IMR-90 (cell line): ENCODE measurements at regions of chr11 and their contacts with region 1.

Region 1: GRCh38 chr11:25702417-25702816 is 629.5 kb upstream of the ANO3 start:
- DNase-seq: no peak
- ATAC-seq: no peak
- H3K4me3 ChIP-seq: no peak overlapping the region
- H3K27ac ChIP-seq: no peak overlapping the region
- H3K4me1 ChIP-seq: no peaks in the 10 kb centered on the region
- H3K27me3 ChIP-seq: no peaks in the 10 kb centered on the region
- CTCF ChIP-seq: no peak
- POLR2A ChIP-seq: no peak
- RAD21 ChIP-seq: no peak

Region 2: GRCh38 chr11:26204839-26205238 is 502.4 kb after region 1 on chr11:
- CTCF ChIA-PET with region 1: no interaction called
- POLR2A ChIA-PET with region 1: no interaction called
- dilution Hi-C with region 1: no loop called
- in situ Hi-C with region 1: no loop called
- intact Hi-C with region 1: loop called (anchors 5 kb)
- DNase-seq: no peak
- ATAC-seq: no peak
- H3K4me3 ChIP-seq: no peak overlapping the region
- H3K27ac ChIP-seq: no peak overlapping the region
- H3K4me1 ChIP-seq: peaks cover 1% of the 10 kb centered on the region
- H3K27me3 ChIP-seq: no peaks in the 10 kb centered on the region
- CTCF ChIP-seq: no peak
- POLR2A ChIP-seq: no peak
- RAD21 ChIP-seq: no peak